ENCODE measurements at regions of chr9 and their contacts with region 1.

Region 1: GRCh38 chr9:100598641-100599145 is 20.8 kb downstream of the CAVIN4 start:
- DNase-seq: no peak
- H3K4me3 ChIP-seq: peak overlapping the region; percentile 49
- H3K27me3 ChIP-seq: no peaks in the 10 kb centered on the region
- CTCF ChIP-seq: no peak

Region 2: DNA sequence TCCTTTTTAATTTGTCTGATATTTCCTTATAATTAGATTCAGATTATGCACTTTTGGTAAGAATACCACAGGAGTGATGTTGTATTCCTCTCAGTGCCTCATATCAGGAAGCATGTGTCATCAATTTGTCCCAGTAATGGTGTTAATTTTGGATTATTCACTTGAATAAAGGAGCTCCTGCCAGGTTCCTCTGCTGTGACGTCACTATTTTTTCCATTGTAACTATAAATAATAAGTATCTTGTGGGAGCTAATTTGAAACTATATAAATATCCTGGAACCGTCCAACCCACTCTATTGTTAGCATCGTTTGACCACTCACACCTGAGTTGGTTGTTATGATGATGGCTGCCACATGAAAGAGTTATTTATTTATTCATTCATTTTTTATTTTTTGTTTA is 391.8 kb before region 1 on chr9:
- CTCF ChIA-PET with region 1: no interaction called
- POLR2A ChIA-PET with region 1: no interaction called
- DNase-seq: no peak
- H3K4me3 ChIP-seq: no peak overlapping the region
- H3K27me3 ChIP-seq: no peaks in the 10 kb centered on the region
- CTCF ChIP-seq: no peak

Region 3: GRCh38 chr9:100505564-100506159 is 93.0 kb before region 1 on chr9:
- CTCF ChIA-PET with region 1: interaction called, 4 read pairs
- POLR2A ChIA-PET with region 1: interaction called, 28 read pairs
- DNase-seq: no peak
- H3K4me3 ChIP-seq: no peak overlapping the region
- H3K27me3 ChIP-seq: no peaks in the 10 kb centered on the region
- CTCF ChIP-seq: peak; percentile 68

Region 4: GRCh38 chr9:100619665-100620064 is 21.0 kb after region 1 on chr9:
- CTCF ChIA-PET with region 1: interaction called, 13 read pairs
- POLR2A ChIA-PET with region 1: no interaction called
- DNase-seq: no peak
- H3K4me3 ChIP-seq: no peak overlapping the region
- H3K27me3 ChIP-seq: no peaks in the 10 kb centered on the region
- CTCF ChIP-seq: no peak

Region 5: DNA sequence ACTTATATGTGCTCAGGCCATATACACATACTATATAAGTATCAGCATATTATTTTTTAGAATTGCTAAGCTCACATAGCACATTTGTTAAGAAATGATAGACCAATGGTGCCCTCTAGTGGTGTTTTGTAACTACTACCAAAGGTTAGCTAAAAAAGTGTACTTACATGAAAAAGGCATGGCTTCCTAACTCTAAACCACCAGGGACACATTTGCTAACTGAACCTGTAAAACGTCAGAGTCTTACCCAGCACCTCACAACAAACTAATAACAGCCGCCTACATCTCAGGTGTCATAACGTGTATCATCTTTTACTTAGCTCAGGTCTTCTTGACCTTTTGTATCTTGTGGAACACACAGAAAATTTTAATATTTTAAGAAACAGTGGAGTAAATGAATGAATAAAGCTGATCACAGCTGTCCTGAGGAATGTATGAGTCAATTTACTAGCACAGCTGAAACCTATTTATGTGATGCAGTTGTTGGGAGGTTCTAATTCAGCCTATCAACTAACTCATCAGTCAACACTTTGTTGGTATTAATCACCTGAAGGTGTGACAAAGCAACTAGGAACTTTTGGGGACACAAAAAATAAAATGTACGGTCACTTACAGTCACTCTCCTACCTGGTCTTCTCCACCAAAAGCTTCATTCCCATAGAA is 713.2 kb after region 1 on chr9:
- CTCF ChIA-PET with region 1: interaction called, 107 read pairs
- POLR2A ChIA-PET with region 1: no interaction called
- DNase-seq: peak; percentile 16
- H3K4me3 ChIP-seq: no peak overlapping the region
- H3K27me3 ChIP-seq: no peaks in the 10 kb centered on the region
- CTCF ChIP-seq: peak; percentile 65